CD4-positive, alpha-beta T cell (primary cell): ENCODE measurements at regions of chr1 and their contacts with region 1.

Region 1: DNA sequence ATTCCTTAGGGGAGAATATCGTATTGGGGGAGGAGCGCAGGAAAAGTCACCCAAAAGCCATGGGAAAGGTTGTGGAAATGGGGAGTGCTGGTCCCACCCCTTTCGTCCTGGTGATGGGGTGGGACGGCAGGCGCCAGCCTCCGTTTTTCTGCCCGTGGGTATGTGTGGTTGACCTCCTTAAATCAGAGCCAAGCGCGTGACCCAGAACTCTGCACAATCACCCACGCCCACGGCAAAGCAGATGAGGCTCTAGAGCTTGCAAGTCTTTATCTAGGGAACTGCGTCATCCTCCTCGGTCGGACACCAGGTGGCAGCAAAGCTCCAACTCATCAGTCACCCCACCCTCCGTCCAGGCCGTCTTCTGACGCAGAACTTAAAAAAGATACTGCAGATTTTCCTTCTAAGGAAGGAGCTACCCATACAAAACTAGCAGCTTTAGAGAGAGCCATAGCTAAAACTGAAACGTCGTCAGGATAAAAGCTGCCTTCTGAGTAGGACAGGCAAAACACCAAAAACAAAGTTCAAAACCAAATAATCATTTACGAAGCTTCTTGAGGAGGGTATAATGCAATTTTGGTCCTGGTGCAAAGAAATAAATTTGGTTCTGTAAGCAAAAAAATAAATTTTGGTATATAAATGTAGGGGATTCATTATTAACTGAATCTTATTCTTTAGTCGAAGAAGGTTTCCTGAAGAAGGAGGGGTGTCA is 62.0 kb downstream of the TBX19 start:
- DNase-seq: peak; percentile 83 to 96 (median 86)
- ATAC-seq: peak; percentile 99
- H3K4me3 ChIP-seq: no peak overlapping the region
- H3K4me3 Mint-ChIP-seq: peak overlapping the region; percentile 61
- H3K27ac ChIP-seq: no peak overlapping the region
- H3K27ac Mint-ChIP-seq: peak overlapping the region; percentile 90
- H3K4me1 ChIP-seq: peaks cover 19% of the 10 kb centered on the region
- H3K4me1 Mint-ChIP-seq: peaks cover 34% of the 10 kb centered on the region
- H3K27me3 ChIP-seq: no peaks in the 10 kb centered on the region
- H3K27me3 Mint-ChIP-seq: no peaks in the 10 kb centered on the region
- CTCF ChIP-seq: peak; percentile 83

Region 2: GRCh38 chr1:167881786-167882185 is 460.9 kb before region 1 on chr1:
- CTCF ChIA-PET with region 1: no interaction called
- POLR2A ChIA-PET with region 1: no interaction called
- intact Hi-C with region 1: no loop called
- DNase-seq: no peak
- ATAC-seq: no peak
- H3K4me3 ChIP-seq: no peak overlapping the region
- H3K4me3 Mint-ChIP-seq: no peak overlapping the region
- H3K27ac ChIP-seq: no peak overlapping the region
- H3K27ac Mint-ChIP-seq: no peak overlapping the region
- H3K4me1 ChIP-seq: no peaks in the 10 kb centered on the region
- H3K4me1 Mint-ChIP-seq: no peaks in the 10 kb centered on the region
- H3K27me3 ChIP-seq: no peaks in the 10 kb centered on the region
- H3K27me3 Mint-ChIP-seq: no peaks in the 10 kb centered on the region
- CTCF ChIP-seq: no peak

Region 3: GRCh38 chr1:168365719-168366479 is 23.2 kb after region 1 on chr1:
- CTCF ChIA-PET with region 1: interaction called, 41 read pairs
- POLR2A ChIA-PET with region 1: interaction called, 32 read pairs
- intact Hi-C with region 1: loop called (anchors 1 to 2 kb)
- DNase-seq: peak in 4 of 14 experiments; percentile 32 to 71 (median 61)
- ATAC-seq: peak; percentile 27
- H3K4me3 ChIP-seq: no peak overlapping the region
- H3K4me3 Mint-ChIP-seq: no peak overlapping the region
- H3K27ac ChIP-seq: no peak overlapping the region
- H3K27ac Mint-ChIP-seq: no peak overlapping the region
- H3K4me1 ChIP-seq: peaks cover 40% of the 10 kb centered on the region
- H3K4me1 Mint-ChIP-seq: peaks cover 28% of the 10 kb centered on the region
- H3K27me3 ChIP-seq: no peaks in the 10 kb centered on the region
- H3K27me3 Mint-ChIP-seq: no peaks in the 10 kb centered on the region
- CTCF ChIP-seq: peak; percentile 31

Region 4: GRCh38 chr1:168439456-168440375 is 97.0 kb after region 1 on chr1:
- CTCF ChIA-PET with region 1: interaction called, 23 read pairs
- POLR2A ChIA-PET with region 1: interaction called, 18 read pairs
- intact Hi-C with region 1: loop called (anchors 2 kb)
- DNase-seq: peak; percentile 65 to 91 (median 74)
- ATAC-seq: peak; percentile 92
- H3K4me3 ChIP-seq: peak overlapping the region; percentile 19
- H3K4me3 Mint-ChIP-seq: peak overlapping the region; percentile 71
- H3K27ac ChIP-seq: no peak overlapping the region
- H3K27ac Mint-ChIP-seq: peak overlapping the region; percentile 10
- H3K4me1 ChIP-seq: peaks cover 36% of the 10 kb centered on the region
- H3K4me1 Mint-ChIP-seq: peaks cover 49% of the 10 kb centered on the region
- H3K27me3 ChIP-seq: no peaks in the 10 kb centered on the region
- H3K27me3 Mint-ChIP-seq: no peaks in the 10 kb centered on the region
- CTCF ChIP-seq: peak; percentile 82

Region 5: DNA sequence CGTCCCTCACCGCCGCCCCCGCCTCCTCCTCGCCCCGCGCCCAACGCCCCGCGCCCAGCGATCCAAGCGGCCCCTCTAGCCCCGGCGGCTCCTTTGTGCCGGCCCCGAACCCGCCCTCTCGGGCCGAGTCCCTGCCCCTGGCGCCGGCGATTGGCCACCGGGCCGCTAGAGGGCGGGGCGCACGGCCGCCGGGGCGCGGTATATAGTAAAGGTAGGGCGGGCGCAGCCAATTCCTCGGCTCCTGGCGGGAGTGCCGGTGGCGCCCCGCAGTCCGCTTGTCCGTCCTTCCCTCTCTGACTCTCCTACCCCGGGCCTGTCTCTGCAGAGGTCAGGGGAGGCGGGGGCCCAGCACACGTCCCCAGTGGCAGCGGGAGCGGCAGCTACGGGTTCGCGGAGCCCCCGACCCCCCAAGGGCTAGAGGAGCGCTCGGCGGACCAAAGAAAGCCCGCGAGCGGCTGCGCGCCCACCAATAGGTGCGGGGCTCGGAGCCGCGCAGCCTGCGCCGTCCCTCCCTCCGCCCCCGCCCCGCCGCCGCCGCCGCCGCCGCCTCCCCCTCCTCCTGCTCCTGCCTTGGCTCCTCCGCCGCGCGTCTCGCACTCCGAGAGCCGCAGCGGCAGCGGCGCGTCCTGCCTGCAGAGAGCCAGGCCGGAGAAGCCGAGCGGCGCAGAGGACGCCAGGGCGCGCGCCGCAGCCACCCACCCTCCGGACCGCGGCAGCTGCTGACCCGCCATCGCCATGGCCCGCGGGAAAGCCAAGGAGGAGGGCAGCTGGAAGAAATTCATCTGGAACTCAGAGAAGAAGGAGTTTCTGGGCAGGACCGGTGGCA is 763.6 kb after region 1 on chr1 and contains the start of gene ATP1B1:
- CTCF ChIA-PET with region 1: interaction called, 5 read pairs
- POLR2A ChIA-PET with region 1: no interaction called
- intact Hi-C with region 1: loop called (anchors 10 kb)
- DNase-seq: peak; percentile 56 to 88 (median 72)
- ATAC-seq: peak; percentile 89
- H3K4me3 ChIP-seq: peak within 1 kb of the TSS; percentile 74
- H3K4me3 Mint-ChIP-seq: peak within 1 kb of the TSS; percentile 94
- H3K27ac ChIP-seq: no peak within 1 kb of the TSS
- H3K27ac Mint-ChIP-seq: peak within 1 kb of the TSS; percentile 5
- H3K4me1 ChIP-seq: peaks cover 36% of the 10 kb centered on the region
- H3K4me1 Mint-ChIP-seq: peaks cover 43% of the 10 kb centered on the region
- H3K27me3 ChIP-seq: no peaks in the 10 kb centered on the region
- H3K27me3 Mint-ChIP-seq: peaks cover 4% of the 10 kb centered on the region
- CTCF ChIP-seq: no peak
- total RNA-seq, gene ATP1B1: 3.5 to 4.5 TPM

Region 6: GRCh38 chr1:169546087-169546995 is 1203.6 kb after region 1 on chr1:
- CTCF ChIA-PET with region 1: no interaction called
- POLR2A ChIA-PET with region 1: no interaction called
- intact Hi-C with region 1: loop called (anchors 2 to 5 kb)
- DNase-seq: peak; percentile 22 to 86 (median 33)
- ATAC-seq: peak; percentile 89
- H3K4me3 ChIP-seq: no peak overlapping the region
- H3K4me3 Mint-ChIP-seq: no peak overlapping the region
- H3K27ac ChIP-seq: no peak overlapping the region
- H3K27ac Mint-ChIP-seq: no peak overlapping the region
- H3K4me1 ChIP-seq: no peaks in the 10 kb centered on the region
- H3K4me1 Mint-ChIP-seq: peaks cover 4% of the 10 kb centered on the region
- H3K27me3 ChIP-seq: no peaks in the 10 kb centered on the region
- H3K27me3 Mint-ChIP-seq: no peaks in the 10 kb centered on the region
- CTCF ChIP-seq: peak; percentile 82